Naive thymus-derived CD4-positive, alpha-beta T cell (primary cell): ENCODE measurements at regions of chr15 and their contacts with region 1.

Region 1: DNA sequence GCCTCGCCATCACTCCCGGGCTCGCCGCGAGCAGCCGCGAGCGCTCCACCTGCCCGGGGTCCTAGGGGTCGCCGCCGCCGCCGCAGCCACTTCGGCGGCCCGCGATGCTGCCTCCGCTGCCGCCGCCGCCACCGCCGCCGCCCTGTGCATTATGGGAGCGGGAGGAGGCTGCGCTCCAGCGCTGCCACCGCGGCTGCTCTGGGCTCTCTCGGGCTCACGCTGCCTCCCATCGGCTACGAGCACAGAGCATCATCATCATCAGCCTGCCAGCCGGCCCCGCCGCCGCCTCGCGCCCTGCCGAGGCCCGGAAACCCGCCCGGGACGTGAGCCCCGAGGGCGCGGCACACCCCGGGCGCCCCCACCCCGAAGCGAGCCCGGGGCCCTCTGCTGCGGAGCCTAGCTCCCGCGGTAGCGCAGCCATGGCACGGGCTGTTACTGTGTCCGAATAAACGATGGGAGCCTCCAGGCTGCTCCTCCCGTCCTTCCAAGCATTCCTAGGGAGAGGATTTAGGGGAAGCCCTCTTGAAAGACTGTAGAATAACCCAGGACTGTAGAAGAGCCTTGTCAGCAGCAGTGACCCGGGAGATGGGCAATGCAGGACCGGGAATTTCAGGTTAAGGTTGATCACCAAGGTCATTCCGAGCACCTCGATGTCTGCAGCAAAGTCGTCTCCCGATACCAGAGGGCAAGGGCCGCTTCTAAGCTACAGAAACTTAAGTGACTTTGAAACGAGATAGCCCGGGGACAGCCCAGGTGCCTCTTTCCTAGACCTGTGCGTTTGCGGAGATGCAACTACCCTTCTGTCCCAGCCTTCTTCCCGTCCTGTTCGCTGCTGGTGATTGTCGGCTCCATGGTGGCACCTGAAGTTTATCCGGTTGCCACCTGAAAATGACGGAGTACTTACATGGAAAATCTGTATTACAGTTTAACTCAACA is 579 bp upstream of the MYO5A start:
- DNase-seq: peak; percentile 72 to 82 (median 80)
- ATAC-seq: peak; percentile 93
- H3K4me3 ChIP-seq: peak overlapping the region; percentile 60
- H3K4me3 Mint-ChIP-seq: peak overlapping the region; percentile 72 to 94 (median 89)
- H3K27ac ChIP-seq: peak overlapping the region; percentile 67
- H3K27ac Mint-ChIP-seq: peak overlapping the region; percentile 38 to 87 (median 74)
- H3K4me1 ChIP-seq: peaks cover 11 to 12% of the 10 kb centered on the region in 2 donors
- H3K4me1 Mint-ChIP-seq: peaks cover 22 to 37% (median 25%) of the 10 kb centered on the region in 7 donors
- H3K27me3 ChIP-seq: no peaks in the 10 kb centered on the region
- H3K27me3 Mint-ChIP-seq: peaks cover 0 to 25% (median 0%) of the 10 kb centered on the region in 5 donors

Region 2: DNA sequence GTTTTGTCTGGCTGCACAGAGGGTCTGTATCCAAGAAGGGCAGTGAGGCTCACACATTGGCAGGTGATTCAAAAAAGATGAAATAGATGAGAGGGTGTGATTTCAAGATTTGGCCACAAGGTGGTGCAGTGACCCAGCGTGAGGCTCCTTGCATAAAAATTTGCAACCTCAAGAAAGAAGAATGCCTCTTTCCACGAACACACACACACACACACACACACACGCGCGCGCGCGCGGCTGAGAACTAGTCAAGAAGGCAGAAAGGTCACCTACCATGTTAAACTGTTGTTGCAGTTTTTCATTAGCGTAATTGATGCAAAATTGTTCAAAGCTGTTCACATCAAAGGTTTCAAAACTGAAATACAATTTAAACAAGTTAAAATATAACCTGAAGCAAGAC is 272.9 kb before region 1 on chr15:
- CTCF ChIA-PET with region 1: no interaction called
- POLR2A ChIA-PET with region 1: no interaction called
- intact Hi-C with region 1: loop called (anchors 2 kb)
- DNase-seq: peak; percentile 27 to 80 (median 75)
- ATAC-seq: peak; percentile 98
- H3K4me3 ChIP-seq: peak overlapping the region; percentile 14
- H3K4me3 Mint-ChIP-seq: peak overlapping the region; percentile 49 to 85 (median 72)
- H3K27ac ChIP-seq: no peak overlapping the region
- H3K27ac Mint-ChIP-seq: peak overlapping the region; percentile 4 to 96 (median 65)
- H3K4me1 ChIP-seq: peaks cover 0 to 12% of the 10 kb centered on the region in 2 donors
- H3K4me1 Mint-ChIP-seq: peaks cover 5 to 55% (median 17%) of the 10 kb centered on the region in 7 donors
- H3K27me3 ChIP-seq: no peaks in the 10 kb centered on the region
- H3K27me3 Mint-ChIP-seq: no peaks in the 10 kb centered on the region

Region 3: DNA sequence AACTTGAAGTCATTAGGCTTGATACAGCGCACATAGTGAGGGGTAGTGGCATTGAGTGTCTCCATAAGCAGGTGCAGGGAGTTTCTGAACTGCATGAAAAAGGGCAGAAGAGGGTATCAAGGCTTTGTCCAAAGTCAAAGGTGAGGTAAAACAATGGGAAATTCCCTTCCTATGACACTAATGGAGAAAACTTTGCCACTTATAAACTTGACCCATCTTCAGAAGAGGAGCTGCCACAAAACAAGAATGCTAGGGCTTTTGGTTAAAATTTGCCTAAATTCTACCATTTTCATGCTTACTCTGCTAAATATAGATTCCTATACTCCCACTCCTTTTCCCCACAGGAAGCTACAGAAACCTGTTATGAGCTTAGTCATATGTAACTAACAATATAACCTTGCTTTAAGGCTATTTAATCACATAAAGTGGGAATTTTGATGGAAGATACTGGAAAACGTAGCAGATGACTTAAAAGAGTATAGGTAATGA is 146.1 kb before region 1 on chr15:
- CTCF ChIA-PET with region 1: no interaction called
- POLR2A ChIA-PET with region 1: no interaction called
- intact Hi-C with region 1: loop called in 1 of 2 experiments (anchors 1 kb)
- DNase-seq: no peak
- ATAC-seq: no peak
- H3K4me3 ChIP-seq: no peak overlapping the region
- H3K4me3 Mint-ChIP-seq: peak overlapping the region in 1 of 10 donors; percentile 17
- H3K27ac ChIP-seq: no peak overlapping the region
- H3K27ac Mint-ChIP-seq: peak overlapping the region in 2 of 9 donors; percentile 21 to 36
- H3K4me1 ChIP-seq: no peaks in the 10 kb centered on the region
- H3K4me1 Mint-ChIP-seq: peaks cover 0 to 2% (median 0%) of the 10 kb centered on the region in 7 donors
- H3K27me3 ChIP-seq: no peaks in the 10 kb centered on the region
- H3K27me3 Mint-ChIP-seq: no peaks in the 10 kb centered on the region

Region 4: DNA sequence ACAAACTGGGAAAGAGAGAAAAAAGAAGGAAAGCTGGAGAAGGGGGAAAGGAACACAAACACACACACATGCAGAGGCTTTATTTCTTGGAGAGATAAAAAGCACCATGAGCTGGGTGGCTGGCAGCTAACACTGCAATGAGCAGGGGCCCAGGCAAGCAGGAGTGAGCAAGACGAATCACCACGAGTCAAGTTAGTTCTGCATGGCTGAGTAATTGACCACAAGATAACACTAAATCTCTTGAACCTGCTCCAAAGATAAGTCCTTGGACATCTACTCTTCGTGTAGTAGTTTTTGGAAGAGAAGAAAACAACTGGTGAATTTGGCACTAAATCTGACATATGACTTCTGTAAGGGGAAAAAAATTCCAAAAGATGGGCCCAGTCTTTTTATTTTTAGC is 101.5 kb before region 1 on chr15:
- CTCF ChIA-PET with region 1: no interaction called
- POLR2A ChIA-PET with region 1: no interaction called
- intact Hi-C with region 1: loop called (anchors 5 kb)
- DNase-seq: no peak
- ATAC-seq: no peak
- H3K4me3 ChIP-seq: no peak overlapping the region
- H3K4me3 Mint-ChIP-seq: no peak overlapping the region
- H3K27ac ChIP-seq: no peak overlapping the region
- H3K27ac Mint-ChIP-seq: no peak overlapping the region
- H3K4me1 ChIP-seq: no peaks in the 10 kb centered on the region
- H3K4me1 Mint-ChIP-seq: peaks cover 4 to 7% (median 4%) of the 10 kb centered on the region in 7 donors
- H3K27me3 ChIP-seq: no peaks in the 10 kb centered on the region
- H3K27me3 Mint-ChIP-seq: no peaks in the 10 kb centered on the region

Region 5: GRCh38 chr15:52445553-52445952 is 83.7 kb before region 1 on chr15:
- CTCF ChIA-PET with region 1: no interaction called
- POLR2A ChIA-PET with region 1: no interaction called
- intact Hi-C with region 1: no loop called
- DNase-seq: no peak
- ATAC-seq: no peak
- H3K4me3 ChIP-seq: no peak overlapping the region
- H3K4me3 Mint-ChIP-seq: no peak overlapping the region
- H3K27ac ChIP-seq: no peak overlapping the region
- H3K27ac Mint-ChIP-seq: peak overlapping the region in 1 of 9 donors; percentile 5
- H3K4me1 ChIP-seq: no peaks in the 10 kb centered on the region
- H3K4me1 Mint-ChIP-seq: peaks cover 11 to 41% (median 34%) of the 10 kb centered on the region in 7 donors
- H3K27me3 ChIP-seq: no peaks in the 10 kb centered on the region
- H3K27me3 Mint-ChIP-seq: no peaks in the 10 kb centered on the region

Region 6: GRCh38 chr15:52518490-52519371 is 10.5 kb before region 1 on chr15:
- CTCF ChIA-PET with region 1: no interaction called
- POLR2A ChIA-PET with region 1: no interaction called
- intact Hi-C with region 1: loop called in 1 of 2 experiments (anchors 1 kb)
- DNase-seq: no peak
- ATAC-seq: no peak
- H3K4me3 ChIP-seq: no peak overlapping the region
- H3K4me3 Mint-ChIP-seq: no peak overlapping the region
- H3K27ac ChIP-seq: no peak overlapping the region
- H3K27ac Mint-ChIP-seq: peak overlapping the region in 2 of 9 donors; percentile 3 to 51
- H3K4me1 ChIP-seq: peaks cover 0 to 3% of the 10 kb centered on the region in 2 donors
- H3K4me1 Mint-ChIP-seq: peaks cover 3 to 33% (median 18%) of the 10 kb centered on the region in 7 donors
- H3K27me3 ChIP-seq: no peaks in the 10 kb centered on the region
- H3K27me3 Mint-ChIP-seq: no peaks in the 10 kb centered on the region

Region 7: GRCh38 chr15:52730173-52730572 is 200.9 kb after region 1 on chr15:
- CTCF ChIA-PET with region 1: no interaction called
- POLR2A ChIA-PET with region 1: no interaction called
- intact Hi-C with region 1: loop called (anchors 1 to 2 kb)
- DNase-seq: peak in 7 of 9 donors; percentile 53 to 82 (median 75)
- ATAC-seq: peak; percentile 96
- H3K4me3 ChIP-seq: no peak overlapping the region
- H3K4me3 Mint-ChIP-seq: peak overlapping the region; percentile 10 to 69 (median 50)
- H3K27ac ChIP-seq: no peak overlapping the region
- H3K27ac Mint-ChIP-seq: peak overlapping the region; percentile 56 to 94 (median 87)
- H3K4me1 ChIP-seq: peaks cover 11 to 15% of the 10 kb centered on the region in 2 donors
- H3K4me1 Mint-ChIP-seq: peaks cover 6 to 31% (median 20%) of the 10 kb centered on the region in 7 donors
- H3K27me3 ChIP-seq: no peaks in the 10 kb centered on the region
- H3K27me3 Mint-ChIP-seq: no peaks in the 10 kb centered on the region